Activated naive CD4-positive, alpha-beta T cell treated with anti-CD3 and anti-CD28 coated beads, Interleukin-2, amount 10 ng/mL, durations not matched to agents 7 days and 5 days (primary cell): ENCODE measurements at regions of chr3 and their contacts with region 1.

Region 1: DNA sequence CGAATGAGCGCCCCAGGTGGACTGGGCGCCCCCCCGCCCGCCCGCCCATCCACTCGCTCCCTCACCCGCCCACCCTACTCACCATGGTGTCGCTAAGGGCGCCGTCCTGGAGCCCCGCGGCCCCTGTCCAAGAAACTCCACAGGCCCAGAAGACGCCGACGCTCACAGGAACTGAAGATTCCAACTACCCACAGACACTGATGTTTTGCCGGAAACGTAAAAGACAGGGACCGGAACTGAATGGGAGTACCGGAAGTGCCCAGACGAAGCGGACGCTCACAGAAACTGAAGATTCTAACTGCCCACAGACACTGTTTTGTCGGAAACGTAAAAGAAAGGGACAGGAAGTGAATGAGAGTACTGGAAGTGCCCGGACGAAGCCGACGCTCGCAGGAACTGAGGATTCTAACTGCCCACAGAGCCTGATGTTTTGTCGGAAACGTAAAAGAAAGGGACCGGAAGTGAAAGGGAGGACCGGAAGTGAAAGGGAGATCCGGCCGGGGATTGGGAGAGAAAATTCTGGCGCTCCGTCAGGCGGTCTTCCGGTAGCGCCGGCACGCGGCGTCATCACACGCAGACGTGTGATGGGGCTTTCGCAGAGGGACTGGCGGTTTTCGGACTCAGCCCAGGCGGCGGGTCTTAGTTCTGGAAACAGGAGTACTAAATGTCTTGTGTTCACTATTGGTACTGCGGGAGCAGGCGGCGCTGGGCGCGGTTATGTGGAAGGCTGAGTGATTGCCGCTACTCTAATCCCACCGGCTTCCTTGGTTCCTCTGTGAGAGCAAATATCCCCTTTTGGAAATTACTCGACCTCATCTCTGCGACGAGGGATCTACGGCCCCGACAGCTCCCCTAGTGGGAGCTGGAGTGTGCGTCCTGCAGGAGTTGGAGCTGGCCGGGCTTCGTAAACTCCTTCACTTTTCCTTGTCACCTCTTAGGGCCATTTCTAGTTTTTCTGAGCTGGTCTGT is at the start of gene ISY1:
- DNase-seq: peak; percentile 91
- H3K4me3 Mint-ChIP-seq: peak within 1 kb of the TSS; percentile 91
- H3K27ac Mint-ChIP-seq: peak within 1 kb of the TSS; percentile 97
- H3K4me1 Mint-ChIP-seq: peaks cover 36% of the 10 kb centered on the region
- H3K27me3 Mint-ChIP-seq: peaks cover 4% of the 10 kb centered on the region

Region 2: DNA sequence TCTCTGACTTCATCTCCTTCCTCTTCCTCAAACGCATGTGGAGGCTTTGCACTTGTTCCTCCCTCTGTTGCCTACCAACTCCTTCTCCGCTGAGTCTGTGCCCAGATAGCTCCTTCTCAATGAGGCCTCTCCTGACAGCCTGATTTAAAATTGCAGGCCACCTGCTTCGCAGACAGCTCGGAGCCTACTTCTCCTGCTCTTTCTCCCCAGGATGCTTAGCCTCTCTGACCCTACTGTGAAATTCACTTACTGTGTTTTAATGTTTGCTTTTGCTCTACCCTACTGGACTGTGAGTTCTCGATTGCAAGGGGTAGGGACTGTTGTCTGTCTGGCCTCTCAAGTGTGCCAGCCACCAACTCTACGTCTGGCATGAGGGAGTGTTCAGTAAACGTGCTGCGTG is 924.5 kb before region 1 on chr3:
- CTCF ChIA-PET with region 1: no interaction called
- DNase-seq: no peak
- H3K4me3 Mint-ChIP-seq: no peak overlapping the region
- H3K27ac Mint-ChIP-seq: no peak overlapping the region
- H3K4me1 Mint-ChIP-seq: no peaks in the 10 kb centered on the region
- H3K27me3 Mint-ChIP-seq: no peaks in the 10 kb centered on the region

Region 3: GRCh38 chr3:129016356-129016719 is 144.8 kb before region 1 on chr3:
- CTCF ChIA-PET with region 1: interaction called, 13 read pairs
- DNase-seq: peak; percentile 77
- H3K4me3 Mint-ChIP-seq: peak overlapping the region; percentile 64
- H3K27ac Mint-ChIP-seq: peak overlapping the region; percentile 93
- H3K4me1 Mint-ChIP-seq: peaks cover 47% of the 10 kb centered on the region
- H3K27me3 Mint-ChIP-seq: peaks cover 3% of the 10 kb centered on the region

Region 4: GRCh38 chr3:129026728-129027543 is 134.2 kb before region 1 on chr3:
- CTCF ChIA-PET with region 1: interaction called, 16 read pairs
- DNase-seq: peak; percentile 96
- H3K4me3 Mint-ChIP-seq: peak overlapping the region; percentile 72
- H3K27ac Mint-ChIP-seq: peak overlapping the region; percentile 85
- H3K4me1 Mint-ChIP-seq: peaks cover 27% of the 10 kb centered on the region
- H3K27me3 Mint-ChIP-seq: peaks cover 38% of the 10 kb centered on the region

Region 5: GRCh38 chr3:129120254-129121004 is 40.7 kb before region 1 on chr3:
- CTCF ChIA-PET with region 1: interaction called, 12 read pairs
- DNase-seq: peak; percentile 98
- H3K4me3 Mint-ChIP-seq: peak overlapping the region; percentile 91
- H3K27ac Mint-ChIP-seq: peak overlapping the region; percentile 98
- H3K4me1 Mint-ChIP-seq: peaks cover 53% of the 10 kb centered on the region
- H3K27me3 Mint-ChIP-seq: no peaks in the 10 kb centered on the region

Region 6: DNA sequence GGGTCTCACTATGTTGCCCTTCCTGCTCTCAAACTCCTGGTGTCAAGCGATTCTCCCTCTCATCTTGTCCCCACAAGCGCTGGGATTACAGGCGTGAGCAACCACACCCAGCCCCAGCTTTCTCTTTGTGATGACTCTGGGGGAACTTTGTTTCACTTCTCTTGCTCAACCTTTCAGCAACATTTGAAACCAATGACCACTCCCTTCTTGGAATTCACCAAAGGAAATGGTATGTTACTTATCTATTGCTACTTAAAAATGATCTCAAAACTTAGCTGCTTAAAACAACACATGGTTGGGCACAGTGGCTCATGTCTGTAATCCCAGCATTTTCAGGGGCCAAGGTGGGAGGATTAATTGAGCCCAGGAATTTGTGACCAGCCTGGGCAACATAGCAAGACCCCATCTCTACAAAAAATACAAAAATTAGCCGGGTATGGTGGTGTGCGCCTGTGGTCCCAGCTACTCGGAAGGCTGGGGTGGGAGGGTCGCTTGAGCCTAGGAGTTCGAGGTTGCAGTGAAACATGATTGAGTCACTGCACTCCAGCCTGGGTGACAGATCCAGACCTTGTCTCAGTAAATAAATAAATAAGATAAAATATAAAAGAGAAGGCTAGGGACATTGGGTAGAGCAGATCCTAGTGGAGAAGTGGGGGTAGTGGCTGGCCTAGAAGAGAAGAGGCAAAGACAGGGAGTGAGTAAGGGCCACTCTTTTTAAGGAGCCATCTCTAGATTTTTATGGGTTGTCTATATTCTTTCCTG is 78.0 kb after region 1 on chr3:
- CTCF ChIA-PET with region 1: interaction called, 87 read pairs
- DNase-seq: peak; percentile 71
- H3K4me3 Mint-ChIP-seq: peak overlapping the region; percentile 50
- H3K27ac Mint-ChIP-seq: peak overlapping the region; percentile 99
- H3K4me1 Mint-ChIP-seq: peaks cover 61% of the 10 kb centered on the region
- H3K27me3 Mint-ChIP-seq: no peaks in the 10 kb centered on the region